ENCODE measurements at regions of chr7 and their contacts with region 1.

Region 1: DNA sequence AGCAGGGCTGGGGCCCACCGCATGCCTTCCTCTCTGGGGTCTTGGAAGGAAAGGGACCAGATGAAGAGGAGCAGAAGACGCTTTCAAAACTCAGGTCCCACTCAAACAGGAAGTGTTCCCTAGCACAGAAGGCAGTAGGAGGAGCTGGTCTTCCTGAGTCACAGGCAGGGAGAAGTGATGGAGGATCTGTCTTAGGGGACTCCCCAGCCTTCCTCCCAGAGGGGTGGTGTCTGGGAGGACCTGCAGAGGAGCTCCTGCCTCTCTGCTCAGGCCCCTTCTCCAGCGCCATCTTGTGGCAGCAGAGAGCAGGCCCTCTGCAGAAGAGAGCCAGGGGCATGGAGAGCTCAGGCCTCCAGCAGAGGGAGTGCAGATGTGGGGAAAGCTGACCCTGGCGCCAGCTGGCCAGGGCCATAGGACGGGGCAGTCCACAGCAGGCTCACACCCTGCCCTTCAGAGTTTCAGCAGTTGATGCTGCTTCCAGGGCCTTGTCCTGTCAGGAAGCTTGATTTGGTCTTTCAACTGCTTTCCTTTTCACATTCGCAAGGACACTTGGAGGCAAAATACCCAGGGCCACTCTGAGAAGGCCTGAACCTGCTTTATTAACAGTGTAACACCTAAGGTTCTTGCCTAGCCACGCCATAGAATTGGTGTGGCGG is 62.2 kb upstream of the TARP start:
- DNase-seq: peak; percentile 75
- H3K4me3 ChIP-seq: no peak overlapping the region
- H3K27ac ChIP-seq: no peak overlapping the region
- H3K4me1 ChIP-seq: no peaks in the 10 kb centered on the region
- H3K27me3 ChIP-seq: no peaks in the 10 kb centered on the region
- CTCF ChIP-seq: peak; percentile 87 to 92

Region 2: DNA sequence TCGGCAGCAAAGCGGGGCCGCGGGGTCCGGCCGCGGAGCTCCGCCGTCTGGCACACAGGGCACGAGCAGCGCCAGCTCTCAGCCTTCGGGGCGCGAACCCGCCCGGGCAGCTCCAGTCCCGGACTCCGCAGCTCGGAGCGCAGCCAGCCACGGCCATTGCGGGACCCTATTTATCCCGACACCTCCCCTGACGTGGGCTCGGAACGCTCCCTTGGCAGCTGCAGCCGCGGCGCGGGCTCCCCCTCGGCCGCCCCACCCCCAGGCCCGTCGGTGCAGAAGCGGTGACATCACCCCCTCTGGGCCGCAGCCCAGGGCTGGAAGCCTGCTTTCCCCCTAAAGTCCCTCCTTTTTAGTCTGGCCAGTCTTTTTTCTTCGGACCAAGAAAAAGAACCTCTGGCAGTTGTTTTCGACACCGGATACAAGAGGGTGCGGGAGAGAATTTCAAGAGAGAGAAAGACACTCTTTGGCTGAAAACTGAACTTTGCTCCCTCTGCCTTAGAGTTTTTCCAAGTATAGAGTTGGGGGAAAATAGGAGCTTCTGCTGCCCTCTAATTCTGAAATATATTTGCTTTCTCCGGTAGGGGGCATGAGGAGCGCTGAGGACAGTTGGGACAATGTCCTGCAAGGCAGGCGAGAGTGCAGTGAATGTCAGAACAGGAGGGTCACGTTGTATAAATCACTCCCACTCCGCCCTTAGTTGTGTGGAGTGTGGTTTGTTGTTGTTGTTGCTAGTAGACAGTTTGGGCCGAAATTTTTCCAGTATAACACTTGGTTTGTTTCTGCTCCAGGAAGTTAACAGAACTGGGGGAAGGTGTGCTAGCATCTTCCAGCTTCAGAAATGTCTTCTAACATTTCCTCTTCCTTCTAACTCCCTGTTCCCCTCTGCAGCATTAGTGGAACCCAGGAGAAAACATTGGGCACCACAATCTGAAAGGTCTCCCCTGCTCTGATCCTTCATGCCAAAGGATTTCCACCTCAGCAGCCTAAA is 418.7 kb before region 1 on chr7 and contains the start of gene SFRP4:
- CTCF ChIA-PET with region 1: no interaction called
- dilution Hi-C with region 1: no loop called
- in situ Hi-C with region 1: loop called in 1 of 2 experiments (anchors 25 kb)
- intact Hi-C with region 1: no loop called
- DNase-seq: peak; percentile 12
- H3K4me3 ChIP-seq: no peak within 1 kb of the TSS
- H3K27ac ChIP-seq: no peak within 1 kb of the TSS
- H3K4me1 ChIP-seq: peaks cover 15% of the 10 kb centered on the region
- H3K27me3 ChIP-seq: peaks cover 10% of the 10 kb centered on the region
- CTCF ChIP-seq: peak; percentile 52 to 61
- total RNA-seq, gene SFRP4: not detected

Region 3: GRCh38 chr7:38424750-38425463 is 89.3 kb after region 1 on chr7:
- CTCF ChIA-PET with region 1: no interaction called
- dilution Hi-C with region 1: no loop called
- in situ Hi-C with region 1: no loop called
- intact Hi-C with region 1: no loop called
- DNase-seq: no peak
- H3K4me3 ChIP-seq: no peak overlapping the region
- H3K27ac ChIP-seq: no peak overlapping the region
- H3K4me1 ChIP-seq: no peaks in the 10 kb centered on the region
- H3K27me3 ChIP-seq: no peaks in the 10 kb centered on the region
- CTCF ChIP-seq: peak in 1 of 2 donors; percentile 32